Activated naive CD4-positive, alpha-beta T cell treated with anti-CD3 and anti-CD28 coated beads for 36 hours (primary cell): ENCODE measurements at regions of chr17 and their contacts with region 1.

Region 1: GRCh38 chr17:58692239-58693055 is at the start of gene RAD51C:
- DNase-seq: peak; percentile 92
- H3K4me3 Mint-ChIP-seq: peak within 1 kb of the TSS; percentile 91
- H3K27ac Mint-ChIP-seq: peak within 1 kb of the TSS; percentile 93
- H3K4me1 Mint-ChIP-seq: peaks cover 31% of the 10 kb centered on the region
- H3K27me3 Mint-ChIP-seq: no peaks in the 10 kb centered on the region
- total RNA-seq, gene RAD51C: 57.7 to 64.6 TPM

Region 2: DNA sequence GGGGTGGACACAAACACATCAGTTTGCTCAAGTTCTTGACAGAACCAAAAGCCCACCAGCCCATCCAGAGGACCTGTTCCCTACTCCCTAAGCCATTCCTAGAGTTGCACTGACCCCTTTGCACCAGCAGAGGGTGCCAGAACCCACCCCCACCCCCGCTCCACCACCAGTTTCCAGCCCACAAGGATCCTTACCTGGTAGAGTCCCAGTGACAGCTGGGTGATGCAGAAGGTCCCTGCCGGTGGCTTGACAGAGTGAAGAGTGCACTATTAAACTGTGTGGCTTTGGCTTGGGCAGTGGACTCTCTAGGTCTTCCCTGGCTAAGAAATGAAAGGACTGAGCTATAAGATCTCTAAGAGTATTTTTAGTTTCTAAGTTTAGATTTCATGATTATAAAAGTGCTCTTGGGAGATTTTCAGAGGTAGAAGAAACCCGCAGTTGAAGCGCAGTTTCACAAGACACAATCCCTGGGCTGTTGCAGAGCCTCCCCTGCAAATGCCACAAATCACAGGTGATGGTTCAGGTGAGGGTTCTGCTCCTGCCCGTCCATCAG is 104.7 kb before region 1 on chr17:
- CTCF ChIA-PET with region 1: interaction called, 6 read pairs
- intact Hi-C with region 1: loop called (anchors 1 kb)
- DNase-seq: peak; percentile 76
- H3K4me3 Mint-ChIP-seq: no peak overlapping the region
- H3K27ac Mint-ChIP-seq: no peak overlapping the region
- H3K4me1 Mint-ChIP-seq: peaks cover 2% of the 10 kb centered on the region
- H3K27me3 Mint-ChIP-seq: no peaks in the 10 kb centered on the region

Region 3: GRCh38 chr17:58703137-58703972 is 10.9 kb after region 1 on chr17:
- CTCF ChIA-PET with region 1: interaction called, 3 read pairs
- intact Hi-C with region 1: loop called (anchors 1 kb)
- DNase-seq: peak; percentile 26
- H3K4me3 Mint-ChIP-seq: no peak overlapping the region
- H3K27ac Mint-ChIP-seq: peak overlapping the region; percentile 71
- H3K4me1 Mint-ChIP-seq: peaks cover 30% of the 10 kb centered on the region
- H3K27me3 Mint-ChIP-seq: no peaks in the 10 kb centered on the region

Region 4: DNA sequence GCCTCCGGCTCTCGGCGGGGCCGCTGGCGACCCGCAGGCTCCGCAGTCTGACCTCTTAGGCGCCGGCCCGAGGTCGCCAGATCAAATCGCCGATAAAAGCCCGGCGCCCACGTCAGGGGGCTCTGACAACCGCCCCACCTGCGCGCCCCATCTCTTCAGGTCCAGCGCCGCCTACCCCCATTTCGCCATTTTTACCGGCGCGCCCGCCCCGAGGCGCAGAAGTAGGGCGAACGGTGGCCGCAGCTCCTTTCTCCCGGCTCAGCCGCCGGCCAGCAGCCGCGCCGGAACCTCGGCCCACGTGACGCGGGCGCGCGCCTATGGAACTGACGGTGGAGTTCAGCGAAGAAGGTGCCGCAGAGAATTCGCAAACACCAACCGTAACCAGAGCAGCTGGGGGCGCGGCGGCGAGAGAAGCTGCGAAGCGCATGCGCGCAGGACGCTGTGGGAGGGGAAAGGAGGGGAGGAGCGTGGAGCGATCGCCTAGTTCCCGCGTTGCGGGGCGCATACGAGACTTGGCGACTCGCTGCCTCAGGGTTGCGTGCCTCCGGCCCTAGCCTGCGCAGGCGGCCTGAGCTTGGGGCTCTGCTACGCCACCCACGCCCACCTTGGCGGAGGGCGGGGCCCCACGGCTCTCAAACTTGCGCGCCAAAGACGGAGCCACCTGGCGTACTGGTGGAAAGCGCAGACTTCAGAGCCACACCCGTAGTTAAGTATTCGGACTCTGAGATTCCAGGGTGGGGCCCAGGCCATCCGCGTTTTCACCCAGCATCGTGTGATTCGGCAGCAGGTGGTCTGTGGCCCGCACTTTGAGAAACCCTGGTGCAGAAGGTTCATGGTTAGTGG is 414.2 kb after region 1 on chr17 and contains the start of gene TRIM37:
- CTCF ChIA-PET with region 1: no interaction called
- intact Hi-C with region 1: loop called (anchors 5 kb)
- DNase-seq: peak; percentile 99
- H3K4me3 Mint-ChIP-seq: peak within 1 kb of the TSS; percentile 96
- H3K27ac Mint-ChIP-seq: peak within 1 kb of the TSS; percentile 89
- H3K4me1 Mint-ChIP-seq: peaks cover 54% of the 10 kb centered on the region
- H3K27me3 Mint-ChIP-seq: no peaks in the 10 kb centered on the region
- total RNA-seq, gene TRIM37: 19.9 to 24.1 TPM